ENCODE measurements at regions of chrX and their contacts with region 1.

Region 1: GRCh38 chrX:72018277-72019112 is 107.8 kb downstream of the NHSL2 start:
- DNase-seq: peak; percentile 84
- ATAC-seq: peak; percentile 100
- H3K4me3 Mint-ChIP-seq: no peak overlapping the region
- H3K27ac Mint-ChIP-seq: no peak overlapping the region
- H3K4me1 Mint-ChIP-seq: peaks cover 18% of the 10 kb centered on the region
- H3K27me3 Mint-ChIP-seq: peaks cover 58% of the 10 kb centered on the region

Region 2: DNA sequence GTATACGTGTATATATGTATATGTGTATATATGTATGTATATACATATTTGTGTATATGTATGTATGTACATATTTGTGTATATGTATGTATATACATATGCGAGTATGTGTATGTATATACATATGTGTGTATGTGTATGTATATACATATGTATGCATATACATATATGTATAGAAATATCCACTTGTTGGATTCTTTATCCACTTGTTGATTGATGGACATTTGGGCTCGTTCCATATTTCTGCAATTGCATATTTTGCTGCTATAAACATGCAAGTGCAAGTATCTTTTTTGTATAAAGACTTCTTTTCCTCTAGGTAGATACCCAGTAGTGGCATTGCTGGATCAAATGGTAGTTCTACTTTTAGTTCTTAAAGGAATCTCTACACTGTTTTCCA is 133.4 kb before region 1 on chrX:
- CTCF ChIA-PET with region 1: no interaction called
- DNase-seq: no peak
- ATAC-seq: no peak
- H3K4me3 Mint-ChIP-seq: no peak overlapping the region
- H3K27ac Mint-ChIP-seq: no peak overlapping the region
- H3K4me1 Mint-ChIP-seq: no peaks in the 10 kb centered on the region
- H3K27me3 Mint-ChIP-seq: peaks cover 8% of the 10 kb centered on the region

Region 3: GRCh38 chrX:72107320-72107719 is 88.8 kb after region 1 on chrX:
- CTCF ChIA-PET with region 1: no interaction called
- DNase-seq: no peak
- ATAC-seq: no peak
- H3K4me3 Mint-ChIP-seq: no peak overlapping the region
- H3K27ac Mint-ChIP-seq: no peak overlapping the region
- H3K4me1 Mint-ChIP-seq: peaks cover 33% of the 10 kb centered on the region
- H3K27me3 Mint-ChIP-seq: peaks cover 46% of the 10 kb centered on the region

Region 4: GRCh38 chrX:72121383-72121782 is 102.9 kb after region 1 on chrX:
- CTCF ChIA-PET with region 1: interaction called, 113 read pairs
- DNase-seq: peak; percentile 71
- ATAC-seq: peak; percentile 85
- H3K4me3 Mint-ChIP-seq: no peak overlapping the region
- H3K27ac Mint-ChIP-seq: peak overlapping the region; percentile 76
- H3K4me1 Mint-ChIP-seq: peaks cover 50% of the 10 kb centered on the region
- H3K27me3 Mint-ChIP-seq: peaks cover 44% of the 10 kb centered on the region

Measured in activated CD8-positive, alpha-beta memory T cell treated with anti-CD3 and anti-CD28 coated beads, Interleukin-2, amount 10 ng/mL, durations not matched to agents 7 days and 5 days (primary cell).